ENCODE measurements at regions of chr17 and their contacts with region 1.

Region 1: GRCh38 chr17:55513885-55514591 is 2.8 kb upstream of the SMIM36 start:
- DNase-seq: peak; percentile 50
- H3K4me3 Mint-ChIP-seq: no peak overlapping the region
- H3K27ac Mint-ChIP-seq: no peak overlapping the region
- H3K4me1 Mint-ChIP-seq: peaks cover 14% of the 10 kb centered on the region
- H3K27me3 Mint-ChIP-seq: peaks cover 25% of the 10 kb centered on the region

Region 2: DNA sequence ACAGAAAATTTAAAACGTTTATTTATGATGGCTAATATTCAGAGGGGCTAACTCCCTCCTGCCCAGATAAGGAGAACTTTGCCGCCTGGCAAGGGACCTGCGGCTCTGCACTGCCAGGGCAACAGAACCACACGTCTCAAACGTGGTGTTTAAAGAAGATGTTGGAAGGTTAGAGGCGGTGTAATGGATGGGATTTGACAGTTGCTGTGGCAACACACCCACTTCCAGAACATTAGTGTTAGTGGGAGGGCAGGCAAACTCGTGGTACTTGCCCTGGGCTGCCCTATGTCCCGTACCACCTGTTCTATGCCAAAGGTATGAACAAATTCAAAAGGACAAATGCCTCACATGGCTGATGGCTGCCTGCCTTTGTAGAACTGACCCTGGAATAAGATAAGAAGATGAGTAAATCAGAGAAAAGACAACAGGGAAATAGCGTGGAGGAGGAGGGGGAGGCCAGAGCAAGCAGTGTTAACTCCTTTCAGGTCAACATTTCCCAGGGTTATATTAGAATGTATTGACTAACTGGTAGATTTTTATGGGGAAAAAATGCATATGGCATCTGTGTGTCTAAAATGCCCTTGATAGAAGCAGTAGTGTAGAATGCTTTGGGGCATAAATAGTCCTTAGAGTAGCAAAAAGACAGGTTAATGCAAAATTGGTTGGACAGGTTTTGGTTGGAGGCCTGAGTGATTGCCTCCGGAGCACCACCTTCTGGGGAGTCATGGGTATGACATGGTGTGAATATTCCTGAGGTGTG is 218.4 kb before region 1 on chr17:
- intact Hi-C with region 1: loop called (anchors 5 kb)
- DNase-seq: peak; percentile 39
- H3K4me3 Mint-ChIP-seq: no peak overlapping the region
- H3K27ac Mint-ChIP-seq: no peak overlapping the region
- H3K4me1 Mint-ChIP-seq: no peaks in the 10 kb centered on the region
- H3K27me3 Mint-ChIP-seq: peaks cover 7% of the 10 kb centered on the region

Region 3: DNA sequence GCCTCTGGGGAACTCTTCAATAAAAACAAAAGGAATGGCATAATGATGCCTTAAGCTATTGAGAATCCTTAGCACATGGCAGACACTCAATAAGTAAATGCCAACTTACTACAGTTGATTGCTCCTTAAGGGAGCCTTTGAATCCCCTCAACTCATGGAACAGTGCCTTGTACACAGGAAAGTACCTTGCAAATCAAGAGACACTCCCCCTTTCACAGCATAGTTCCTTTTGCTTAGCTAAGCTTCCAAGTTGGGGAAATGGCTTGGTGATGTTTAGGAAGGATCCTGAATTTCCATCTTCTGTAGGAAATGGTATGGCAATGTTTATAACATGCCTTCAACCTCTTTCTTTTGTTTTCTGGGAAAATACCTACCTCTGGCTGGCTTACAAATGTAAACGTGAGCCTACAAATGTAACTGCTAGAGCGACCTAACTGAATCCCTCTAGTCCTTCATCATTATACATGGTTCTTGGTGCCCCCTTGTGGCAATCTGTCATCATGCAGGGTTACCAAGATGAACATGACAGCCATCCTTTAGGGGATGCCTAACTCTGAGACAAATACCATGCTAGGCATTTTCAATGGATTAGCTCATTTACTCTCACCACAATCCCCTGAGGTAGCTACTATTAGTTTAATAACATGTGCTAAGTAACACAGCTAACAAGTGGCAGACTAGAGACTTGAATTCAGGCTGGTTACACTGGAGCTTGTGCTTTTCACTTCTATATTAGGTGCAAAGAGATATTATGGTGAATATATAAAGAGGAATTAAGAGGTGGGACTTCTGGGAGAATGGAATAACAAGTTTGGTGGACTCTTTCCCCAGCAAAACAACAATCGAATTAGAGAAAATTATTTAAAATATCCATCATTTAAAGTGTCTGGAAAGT is 157.4 kb before region 1 on chr17:
- intact Hi-C with region 1: loop called (anchors 5 kb)
- DNase-seq: peak; percentile 65
- H3K4me3 Mint-ChIP-seq: no peak overlapping the region
- H3K27ac Mint-ChIP-seq: no peak overlapping the region
- H3K4me1 Mint-ChIP-seq: peaks cover 6% of the 10 kb centered on the region
- H3K27me3 Mint-ChIP-seq: peaks cover 29% of the 10 kb centered on the region

Region 4: DNA sequence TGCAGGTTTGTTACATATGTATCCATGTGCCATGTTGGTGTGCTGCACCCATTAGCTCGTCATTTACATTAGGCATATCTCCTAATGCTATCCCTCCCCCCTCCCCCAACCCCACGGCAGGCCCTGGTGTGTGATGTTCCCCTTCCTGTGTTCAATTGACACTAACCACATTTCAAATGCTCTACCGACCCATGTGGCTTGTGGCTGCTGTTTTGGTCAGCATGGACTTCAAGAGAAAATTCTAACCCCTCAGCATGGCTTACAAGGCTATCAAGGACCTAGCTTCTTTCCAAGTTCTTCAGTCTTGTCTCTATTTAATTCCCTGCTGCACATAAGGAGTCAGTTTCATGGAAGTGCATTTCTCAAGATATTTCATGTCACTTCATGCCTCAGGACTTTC is 145.3 kb before region 1 on chr17:
- intact Hi-C with region 1: no loop called
- DNase-seq: no peak
- H3K4me3 Mint-ChIP-seq: no peak overlapping the region
- H3K27ac Mint-ChIP-seq: no peak overlapping the region
- H3K4me1 Mint-ChIP-seq: peaks cover 3% of the 10 kb centered on the region
- H3K27me3 Mint-ChIP-seq: peaks cover 11% of the 10 kb centered on the region

Region 5: GRCh38 chr17:55388842-55389241 is 125.2 kb before region 1 on chr17:
- intact Hi-C with region 1: loop called (anchors 10 kb)
- DNase-seq: no peak
- H3K4me3 Mint-ChIP-seq: no peak overlapping the region
- H3K27ac Mint-ChIP-seq: no peak overlapping the region
- H3K4me1 Mint-ChIP-seq: no peaks in the 10 kb centered on the region
- H3K27me3 Mint-ChIP-seq: no peaks in the 10 kb centered on the region